ENCODE measurements at regions of chr13 and their contacts with region 1.

Region 1: GRCh38 chr13:52194184-52194868 is 34.9 kb upstream of the NEK3 start:
- DNase-seq: peak; percentile 77 to 91 (median 86)
- ATAC-seq: peak; percentile 80
- H3K4me3 ChIP-seq: peak overlapping the region; percentile 85
- H3K4me3 Mint-ChIP-seq: peak overlapping the region; percentile 97
- H3K27ac ChIP-seq: peak overlapping the region; percentile 48 to 59
- H3K27ac Mint-ChIP-seq: peak overlapping the region; percentile 95
- H3K4me1 ChIP-seq: peaks cover 23% of the 10 kb centered on the region
- H3K4me1 Mint-ChIP-seq: peaks cover 33% of the 10 kb centered on the region
- H3K27me3 ChIP-seq: no peaks in the 10 kb centered on the region
- H3K27me3 Mint-ChIP-seq: no peaks in the 10 kb centered on the region
- CTCF ChIP-seq: no peak

Region 2: GRCh38 chr13:51494156-51494555 is 700.2 kb before region 1 on chr13:
- CTCF ChIA-PET with region 1: no interaction called
- POLR2A ChIA-PET with region 1: no interaction called
- intact Hi-C with region 1: no loop called
- DNase-seq: no peak
- ATAC-seq: no peak
- H3K4me3 ChIP-seq: no peak overlapping the region
- H3K4me3 Mint-ChIP-seq: no peak overlapping the region
- H3K27ac ChIP-seq: no peak overlapping the region
- H3K27ac Mint-ChIP-seq: no peak overlapping the region
- H3K4me1 ChIP-seq: no peaks in the 10 kb centered on the region
- H3K4me1 Mint-ChIP-seq: no peaks in the 10 kb centered on the region
- H3K27me3 ChIP-seq: no peaks in the 10 kb centered on the region
- H3K27me3 Mint-ChIP-seq: peaks cover 6% of the 10 kb centered on the region
- CTCF ChIP-seq: no peak

Region 3: GRCh38 chr13:51825165-51825592 is 369.1 kb before region 1 on chr13:
- CTCF ChIA-PET with region 1: no interaction called
- POLR2A ChIA-PET with region 1: interaction called, 3 read pairs
- intact Hi-C with region 1: loop called in 1 of 2 experiments (anchors 5 kb)
- DNase-seq: peak in 4 of 14 experiments; percentile 39 to 85 (median 76)
- ATAC-seq: peak; percentile 58
- H3K4me3 ChIP-seq: peak overlapping the region; percentile 54
- H3K4me3 Mint-ChIP-seq: peak overlapping the region; percentile 86
- H3K27ac ChIP-seq: peak overlapping the region; percentile 76 to 79
- H3K27ac Mint-ChIP-seq: peak overlapping the region; percentile 89
- H3K4me1 ChIP-seq: peaks cover 78% of the 10 kb centered on the region
- H3K4me1 Mint-ChIP-seq: peaks cover 88% of the 10 kb centered on the region
- H3K27me3 ChIP-seq: no peaks in the 10 kb centered on the region
- H3K27me3 Mint-ChIP-seq: no peaks in the 10 kb centered on the region
- CTCF ChIP-seq: no peak

Region 4: GRCh38 chr13:52097197-52097596 is 97.1 kb before region 1 on chr13:
- CTCF ChIA-PET with region 1: no interaction called
- POLR2A ChIA-PET with region 1: no interaction called
- intact Hi-C with region 1: no loop called
- DNase-seq: no peak
- ATAC-seq: no peak
- H3K4me3 ChIP-seq: no peak overlapping the region
- H3K4me3 Mint-ChIP-seq: no peak overlapping the region
- H3K27ac ChIP-seq: no peak overlapping the region
- H3K27ac Mint-ChIP-seq: no peak overlapping the region
- H3K4me1 ChIP-seq: no peaks in the 10 kb centered on the region
- H3K4me1 Mint-ChIP-seq: no peaks in the 10 kb centered on the region
- H3K27me3 ChIP-seq: no peaks in the 10 kb centered on the region
- H3K27me3 Mint-ChIP-seq: no peaks in the 10 kb centered on the region
- CTCF ChIP-seq: no peak

Region 5: DNA sequence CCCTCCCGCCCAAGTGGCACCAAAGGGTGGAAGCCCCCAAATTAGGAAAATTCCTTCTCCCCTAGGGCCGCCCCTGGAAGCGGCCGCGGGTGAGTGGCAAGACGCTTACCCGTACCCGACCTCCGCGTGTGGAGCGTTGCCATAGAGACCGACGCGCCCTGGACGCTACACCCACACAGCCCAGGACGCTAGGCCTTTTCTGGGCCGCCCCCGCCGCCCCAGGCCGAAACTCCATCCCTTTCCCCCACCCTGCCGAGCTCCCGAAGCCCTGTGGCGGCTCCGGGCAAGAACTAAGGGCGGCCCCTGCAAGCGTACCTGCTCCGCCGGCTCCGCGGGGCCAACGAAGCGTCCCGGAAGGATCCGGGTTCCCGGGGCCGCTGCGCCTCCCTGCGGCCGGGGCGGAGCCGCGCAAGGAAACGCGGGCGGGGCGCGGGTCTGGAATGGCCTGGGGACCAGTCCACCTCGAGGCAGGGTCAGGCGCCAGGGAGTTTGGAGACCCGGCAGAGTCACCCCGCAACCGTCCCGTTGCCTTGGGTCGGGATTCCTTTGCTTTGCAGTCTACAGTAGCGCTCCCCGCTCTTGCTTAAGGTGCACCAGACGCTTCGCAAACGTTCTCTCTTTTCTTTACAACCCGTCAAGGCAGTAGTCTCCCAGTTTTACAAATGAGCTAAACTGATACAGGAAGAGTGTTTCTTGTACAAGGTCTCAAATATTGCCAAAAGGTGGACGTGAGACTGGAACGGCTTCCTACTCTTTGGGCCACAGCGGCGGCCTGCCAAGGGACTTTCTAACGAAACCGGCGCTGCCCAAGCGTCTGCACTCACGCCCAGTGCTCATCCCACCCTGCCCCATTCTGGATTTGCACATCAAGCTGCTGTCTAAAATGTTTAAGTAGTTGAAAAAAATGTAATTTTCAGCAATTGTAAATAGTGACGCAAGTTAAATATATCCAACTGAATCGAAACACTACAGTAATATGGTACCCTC is 65.3 kb before region 1 on chr13 and contains the start of gene NEK5:
- CTCF ChIA-PET with region 1: no interaction called
- POLR2A ChIA-PET with region 1: no interaction called
- intact Hi-C with region 1: loop called in 1 of 2 experiments (anchors 5 kb)
- DNase-seq: peak; percentile 8 to 72 (median 39)
- ATAC-seq: peak; percentile 82
- H3K4me3 ChIP-seq: peak within 1 kb of the TSS; percentile 65
- H3K4me3 Mint-ChIP-seq: peak within 1 kb of the TSS; percentile 76
- H3K27ac ChIP-seq: no peak within 1 kb of the TSS
- H3K27ac Mint-ChIP-seq: no peak within 1 kb of the TSS
- H3K4me1 ChIP-seq: peaks cover 19% of the 10 kb centered on the region
- H3K4me1 Mint-ChIP-seq: peaks cover 20% of the 10 kb centered on the region
- H3K27me3 ChIP-seq: peaks cover 3 to 5% of the 10 kb centered on the region in 2 experiments
- H3K27me3 Mint-ChIP-seq: no peaks in the 10 kb centered on the region
- CTCF ChIP-seq: peak; percentile 70
- total RNA-seq, gene NEK5: 0.08 TPM in 1 of 2 experiments, not detected in the other

Region 6: DNA sequence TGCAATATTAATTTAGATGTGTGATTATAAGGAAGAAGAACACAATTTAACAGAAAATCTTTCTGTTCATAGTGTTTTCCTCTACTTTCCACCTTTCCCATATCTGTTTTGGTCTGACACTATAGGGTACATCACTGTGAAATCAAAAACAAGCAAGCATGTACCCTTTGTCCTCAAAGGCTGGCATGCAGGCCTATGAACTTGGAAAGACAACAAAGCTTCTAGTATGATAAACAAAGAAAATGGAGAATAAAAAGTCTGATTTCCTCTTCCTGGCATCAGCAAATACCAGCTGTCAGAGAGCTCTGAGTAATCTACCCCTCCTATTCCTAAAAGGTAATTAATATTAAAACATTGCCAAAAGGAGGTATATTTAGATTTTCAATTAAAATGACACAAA is 29.3 kb before region 1 on chr13:
- CTCF ChIA-PET with region 1: no interaction called
- POLR2A ChIA-PET with region 1: interaction called, 10 read pairs
- intact Hi-C with region 1: loop called in 1 of 2 experiments (anchors 2 kb)
- DNase-seq: no peak
- ATAC-seq: no peak
- H3K4me3 ChIP-seq: no peak overlapping the region
- H3K4me3 Mint-ChIP-seq: no peak overlapping the region
- H3K27ac ChIP-seq: no peak overlapping the region
- H3K27ac Mint-ChIP-seq: no peak overlapping the region
- H3K4me1 ChIP-seq: peaks cover 6% of the 10 kb centered on the region
- H3K4me1 Mint-ChIP-seq: peaks cover 17% of the 10 kb centered on the region
- H3K27me3 ChIP-seq: no peaks in the 10 kb centered on the region
- H3K27me3 Mint-ChIP-seq: no peaks in the 10 kb centered on the region
- CTCF ChIP-seq: no peak

Region 7: GRCh38 chr13:52359534-52359933 is 165.2 kb after region 1 on chr13:
- CTCF ChIA-PET with region 1: no interaction called
- POLR2A ChIA-PET with region 1: no interaction called
- intact Hi-C with region 1: no loop called
- DNase-seq: no peak
- ATAC-seq: no peak
- H3K4me3 ChIP-seq: no peak overlapping the region
- H3K4me3 Mint-ChIP-seq: no peak overlapping the region
- H3K27ac ChIP-seq: no peak overlapping the region
- H3K27ac Mint-ChIP-seq: no peak overlapping the region
- H3K4me1 ChIP-seq: no peaks in the 10 kb centered on the region
- H3K4me1 Mint-ChIP-seq: no peaks in the 10 kb centered on the region
- H3K27me3 ChIP-seq: peaks cover 0 to 1% of the 10 kb centered on the region in 2 experiments
- H3K27me3 Mint-ChIP-seq: peaks cover 31% of the 10 kb centered on the region
- CTCF ChIP-seq: no peak

Region 8: GRCh38 chr13:52652196-52652979 is 458.1 kb after region 1 on chr13 and contains the start of gene SUGT1:
- CTCF ChIA-PET with region 1: no interaction called
- POLR2A ChIA-PET with region 1: interaction called, 11 read pairs
- intact Hi-C with region 1: loop called in 1 of 2 experiments (anchors 2 kb)
- DNase-seq: peak; percentile 88 to 98 (median 94)
- ATAC-seq: peak; percentile 91
- H3K4me3 ChIP-seq: peak within 1 kb of the TSS; percentile 85
- H3K4me3 Mint-ChIP-seq: no peak within 1 kb of the TSS
- H3K27ac ChIP-seq: peak within 1 kb of the TSS; percentile 93 to 97
- H3K27ac Mint-ChIP-seq: no peak within 1 kb of the TSS
- H3K4me1 ChIP-seq: peaks cover 26% of the 10 kb centered on the region
- H3K4me1 Mint-ChIP-seq: peaks cover 12% of the 10 kb centered on the region
- H3K27me3 ChIP-seq: no peaks in the 10 kb centered on the region
- H3K27me3 Mint-ChIP-seq: no peaks in the 10 kb centered on the region
- CTCF ChIP-seq: peak; percentile 58
- total RNA-seq, gene SUGT1: 18.5 to 20.1 TPM

Measured in CD4-positive, alpha-beta T cell (primary cell).